HCT116 (cell line): ENCODE measurements at regions of chr5 and their contacts with region 1.

Region 1: GRCh38 chr5:145981589-145982491 is 45.5 kb downstream of the SH3RF2 start:
- DNase-seq: no peak
- ATAC-seq: peak; percentile 77
- H3K4me3 ChIP-seq: peak overlapping the region in 1 of 2 experiments; percentile 6; a peak in 1 of 4 replicates
- H3K27ac ChIP-seq: peak overlapping the region; percentile 15; the same call in 1 of the 2 replicates
- H3K4me1 ChIP-seq: peaks cover 55 to 61% of the 10 kb centered on the region in 2 experiments
- H3K27me3 ChIP-seq: no peaks in the 10 kb centered on the region
- CTCF ChIP-seq: no peak
- POLR2A ChIP-seq: no peak
- RAD21 ChIP-seq: no peak

Region 2: GRCh38 chr5:145908205-145908945 is 73.5 kb before region 1 on chr5:
- CTCF ChIA-PET with region 1: interaction called, 6 read pairs
- POLR2A ChIA-PET with region 1: no interaction called
- RAD21 ChIA-PET with region 1: no interaction called
- intact Hi-C with region 1: loop called (anchors 5 kb)
- DNase-seq: peak; percentile 18
- ATAC-seq: peak; percentile 76
- H3K4me3 ChIP-seq: no peak overlapping the region
- H3K27ac ChIP-seq: no peak overlapping the region
- H3K4me1 ChIP-seq: no peaks in the 10 kb centered on the region
- H3K27me3 ChIP-seq: no peaks in the 10 kb centered on the region
- CTCF ChIP-seq: peak; percentile 38 to 65 (median 50); a peak in 4 of 6 replicates
- POLR2A ChIP-seq: no peak
- RAD21 ChIP-seq: peak; percentile 68